ENCODE measurements at regions of chr10 and their contacts with region 1.

Region 1: GRCh38 chr10:102352066-102352715 is 43.3 kb upstream of the NFKB2 start:
- DNase-seq: peak; percentile 63 to 82 (median 70)
- H3K4me3 ChIP-seq: no peak overlapping the region
- H3K27ac ChIP-seq: no peak overlapping the region
- H3K4me1 ChIP-seq: no peaks in the 10 kb centered on the region
- H3K27me3 ChIP-seq: no peaks in the 10 kb centered on the region

Region 2: GRCh38 chr10:102167861-102168260 is 184.3 kb before region 1 on chr10:
- CTCF ChIA-PET with region 1: interaction called, 62 read pairs
- POLR2A ChIA-PET with region 1: no interaction called
- DNase-seq: no peak
- H3K4me3 ChIP-seq: no peak overlapping the region
- H3K27ac ChIP-seq: no peak overlapping the region
- H3K4me1 ChIP-seq: peaks cover 0 to 3% (median 3%) of the 10 kb centered on the region in 4 experiments
- H3K27me3 ChIP-seq: peaks cover 0 to 2% (median 0%) of the 10 kb centered on the region in 5 experiments

Region 3: DNA sequence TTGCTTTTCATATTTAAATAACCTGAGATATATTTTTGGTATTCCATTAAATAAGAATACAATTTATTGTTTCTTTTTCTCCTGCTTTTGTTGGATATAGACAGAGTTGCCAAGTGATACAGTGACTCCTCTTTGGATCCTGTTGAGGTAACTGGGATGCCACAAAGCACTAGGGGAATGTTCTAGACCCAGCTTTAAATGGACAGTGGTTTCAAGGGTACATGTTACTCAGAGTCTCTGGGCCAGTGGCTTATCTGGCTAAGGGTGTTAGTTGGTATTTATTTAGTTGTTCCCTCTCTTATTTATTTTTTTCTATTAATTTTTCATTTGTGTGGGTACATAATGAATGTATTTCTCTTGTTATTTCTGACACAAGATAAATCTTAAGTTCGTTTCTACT is 97.8 kb before region 1 on chr10:
- CTCF ChIA-PET with region 1: interaction called, 12 read pairs
- POLR2A ChIA-PET with region 1: no interaction called
- DNase-seq: no peak
- H3K4me3 ChIP-seq: no peak overlapping the region
- H3K27ac ChIP-seq: no peak overlapping the region
- H3K4me1 ChIP-seq: no peaks in the 10 kb centered on the region
- H3K27me3 ChIP-seq: no peaks in the 10 kb centered on the region

Region 4: GRCh38 chr10:102310361-102311024 is 41.7 kb before region 1 on chr10:
- CTCF ChIA-PET with region 1: interaction called, 18 read pairs
- POLR2A ChIA-PET with region 1: no interaction called
- DNase-seq: no peak
- H3K4me3 ChIP-seq: no peak overlapping the region
- H3K27ac ChIP-seq: no peak overlapping the region
- H3K4me1 ChIP-seq: peaks cover 4 to 33% (median 11%) of the 10 kb centered on the region in 4 experiments
- H3K27me3 ChIP-seq: no peaks in the 10 kb centered on the region

Region 5: GRCh38 chr10:102368072-102368471 is 15.9 kb after region 1 on chr10:
- CTCF ChIA-PET with region 1: interaction called, 52 read pairs
- POLR2A ChIA-PET with region 1: no interaction called
- DNase-seq: no peak
- H3K4me3 ChIP-seq: no peak overlapping the region
- H3K27ac ChIP-seq: no peak overlapping the region
- H3K4me1 ChIP-seq: no peaks in the 10 kb centered on the region
- H3K27me3 ChIP-seq: no peaks in the 10 kb centered on the region